Endothelial cell of umbilical vein (primary cell): ENCODE measurements at regions of chr2 and their contacts with region 1.

Region 1: DNA sequence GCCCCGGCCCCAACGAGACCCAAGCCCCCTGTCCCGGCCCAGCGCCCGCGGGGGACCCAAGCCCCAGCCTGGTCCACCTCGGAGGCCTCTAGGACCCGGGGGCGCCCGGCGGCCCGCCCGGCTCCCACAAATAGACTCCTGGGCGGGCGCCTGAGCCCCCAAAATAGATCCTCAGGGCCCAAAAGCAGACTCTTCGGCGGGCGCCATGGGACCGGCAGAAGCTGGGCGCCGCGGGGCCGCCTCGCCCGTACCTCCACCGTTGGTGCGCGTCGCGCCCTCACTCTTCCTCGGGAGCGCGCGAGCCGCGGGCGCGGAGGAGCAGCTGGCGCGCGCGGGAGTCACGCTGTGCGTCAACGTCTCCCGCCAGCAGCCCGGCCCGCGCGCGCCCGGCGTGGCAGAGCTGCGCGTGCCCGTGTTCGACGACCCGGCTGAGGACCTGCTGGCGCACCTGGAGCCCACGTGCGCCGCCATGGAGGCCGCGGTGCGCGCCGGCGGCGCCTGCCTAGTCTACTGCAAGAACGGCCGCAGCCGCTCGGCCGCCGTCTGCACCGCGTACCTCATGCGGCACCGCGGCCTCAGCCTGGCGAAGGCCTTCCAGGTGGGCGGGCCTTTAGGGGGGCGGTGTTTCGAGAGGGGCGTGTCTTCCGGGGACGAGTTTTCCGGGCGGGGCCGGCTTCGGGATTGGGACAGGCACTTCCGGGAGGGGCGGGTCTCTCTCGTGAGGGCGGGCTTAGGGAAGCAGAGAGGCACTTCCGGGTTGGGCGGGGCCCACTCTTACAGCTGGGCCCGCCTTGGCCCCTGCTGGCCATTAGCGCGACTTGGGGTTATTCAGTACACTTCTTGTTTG is 546 bp downstream of the DUSP28 start:
- DNase-seq: peak; percentile 98
- H3K4me3 ChIP-seq: peak overlapping the region; percentile 42 to 66 (median 61)
- H3K27ac ChIP-seq: peak overlapping the region; percentile 77
- H3K4me1 ChIP-seq: peaks cover 40% of the 10 kb centered on the region
- H3K27me3 ChIP-seq: no peaks in the 10 kb centered on the region
- CTCF ChIP-seq: peak; percentile 12 to 48
- POLR2A ChIP-seq: peak; percentile 92

Region 2: GRCh38 chr2:240021488-240022104 is 539.1 kb before region 1 on chr2:
- CTCF ChIA-PET with region 1: no interaction called
- POLR2A ChIA-PET with region 1: no interaction called
- dilution Hi-C with region 1: no loop called
- intact Hi-C with region 1: loop called (anchors 5 kb)
- DNase-seq: peak; percentile 65
- H3K4me3 ChIP-seq: no peak overlapping the region
- H3K27ac ChIP-seq: no peak overlapping the region
- H3K4me1 ChIP-seq: peaks cover 10% of the 10 kb centered on the region
- H3K27me3 ChIP-seq: no peaks in the 10 kb centered on the region
- CTCF ChIP-seq: peak; percentile 95 to 97
- POLR2A ChIP-seq: no peak

Region 3: GRCh38 chr2:240339996-240340761 is 220.5 kb before region 1 on chr2:
- CTCF ChIA-PET with region 1: no interaction called
- POLR2A ChIA-PET with region 1: no interaction called
- dilution Hi-C with region 1: no loop called
- intact Hi-C with region 1: no loop called
- DNase-seq: no peak
- H3K4me3 ChIP-seq: no peak overlapping the region
- H3K27ac ChIP-seq: no peak overlapping the region
- H3K4me1 ChIP-seq: no peaks in the 10 kb centered on the region
- H3K27me3 ChIP-seq: no peaks in the 10 kb centered on the region
- CTCF ChIP-seq: no peak
- POLR2A ChIP-seq: no peak

Region 4: DNA sequence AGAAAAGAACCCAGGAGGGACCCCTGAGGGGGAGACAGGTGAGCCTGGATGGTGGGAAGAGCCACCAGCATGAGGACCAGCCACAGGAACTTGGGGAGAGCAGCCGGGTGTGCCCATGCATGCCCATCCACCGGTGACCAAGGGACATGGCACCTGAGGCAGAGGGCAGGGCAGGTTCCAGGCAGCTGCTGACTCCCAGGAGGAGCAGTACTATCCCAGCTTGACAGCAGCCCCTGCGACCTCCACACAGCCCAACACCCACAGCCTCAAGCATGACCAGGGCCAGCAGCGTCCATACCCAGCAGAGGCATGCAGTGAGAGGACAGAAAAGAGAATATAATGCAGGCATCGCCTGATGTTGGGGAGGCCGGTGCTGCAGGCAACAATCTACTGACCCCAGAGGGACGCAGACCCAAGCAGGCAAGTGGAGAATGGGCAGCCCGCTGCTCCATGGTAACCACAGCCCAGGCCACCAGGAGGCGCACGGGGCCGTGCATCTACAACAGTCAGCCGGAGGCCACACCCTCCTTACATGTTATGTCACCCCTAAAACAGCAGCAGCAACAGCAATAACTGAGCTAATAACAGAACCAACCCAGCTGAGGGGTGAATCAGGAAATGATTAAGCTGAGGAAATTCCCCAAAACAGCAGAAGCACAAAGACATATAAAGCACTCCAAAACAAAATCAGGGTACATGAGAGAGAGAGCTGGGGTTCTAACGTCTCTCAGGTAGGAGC is 47.0 kb before region 1 on chr2:
- CTCF ChIA-PET with region 1: interaction called, 17 read pairs
- POLR2A ChIA-PET with region 1: interaction called, 4 read pairs
- dilution Hi-C with region 1: no loop called
- intact Hi-C with region 1: loop called (anchors 2 kb)
- DNase-seq: peak; percentile 70
- H3K4me3 ChIP-seq: no peak overlapping the region
- H3K27ac ChIP-seq: no peak overlapping the region
- H3K4me1 ChIP-seq: no peaks in the 10 kb centered on the region
- H3K27me3 ChIP-seq: no peaks in the 10 kb centered on the region
- CTCF ChIP-seq: peak; percentile 87 to 92
- POLR2A ChIP-seq: no peak

Region 5: GRCh38 chr2:240586198-240586918 is 25.7 kb after region 1 on chr2 and contains the start of gene CAPN10:
- CTCF ChIA-PET with region 1: interaction called, 47 read pairs
- POLR2A ChIA-PET with region 1: interaction called, 13 read pairs
- dilution Hi-C with region 1: no loop called
- intact Hi-C with region 1: loop called (anchors 1 kb)
- DNase-seq: peak; percentile 95
- H3K4me3 ChIP-seq: peak within 1 kb of the TSS; percentile 76 to 84 (median 84)
- H3K27ac ChIP-seq: peak within 1 kb of the TSS; percentile 74
- H3K4me1 ChIP-seq: peaks cover 17% of the 10 kb centered on the region
- H3K27me3 ChIP-seq: no peaks in the 10 kb centered on the region
- CTCF ChIP-seq: no peak
- POLR2A ChIP-seq: peak; percentile 66
- total RNA-seq, gene CAPN10: 37.9 and 39.9 TPM in 2 replicates

Region 6: GRCh38 chr2:240832205-240832727 is 271.6 kb after region 1 on chr2:
- CTCF ChIA-PET with region 1: no interaction called
- POLR2A ChIA-PET with region 1: no interaction called
- dilution Hi-C with region 1: no loop called
- intact Hi-C with region 1: loop called (anchors 2 kb)
- DNase-seq: peak; percentile 80
- H3K4me3 ChIP-seq: no peak overlapping the region
- H3K27ac ChIP-seq: no peak overlapping the region
- H3K4me1 ChIP-seq: peaks cover 5% of the 10 kb centered on the region
- H3K27me3 ChIP-seq: peaks cover 6 to 19% of the 10 kb centered on the region in 2 experiments
- CTCF ChIP-seq: no peak
- POLR2A ChIP-seq: no peak

Region 7: DNA sequence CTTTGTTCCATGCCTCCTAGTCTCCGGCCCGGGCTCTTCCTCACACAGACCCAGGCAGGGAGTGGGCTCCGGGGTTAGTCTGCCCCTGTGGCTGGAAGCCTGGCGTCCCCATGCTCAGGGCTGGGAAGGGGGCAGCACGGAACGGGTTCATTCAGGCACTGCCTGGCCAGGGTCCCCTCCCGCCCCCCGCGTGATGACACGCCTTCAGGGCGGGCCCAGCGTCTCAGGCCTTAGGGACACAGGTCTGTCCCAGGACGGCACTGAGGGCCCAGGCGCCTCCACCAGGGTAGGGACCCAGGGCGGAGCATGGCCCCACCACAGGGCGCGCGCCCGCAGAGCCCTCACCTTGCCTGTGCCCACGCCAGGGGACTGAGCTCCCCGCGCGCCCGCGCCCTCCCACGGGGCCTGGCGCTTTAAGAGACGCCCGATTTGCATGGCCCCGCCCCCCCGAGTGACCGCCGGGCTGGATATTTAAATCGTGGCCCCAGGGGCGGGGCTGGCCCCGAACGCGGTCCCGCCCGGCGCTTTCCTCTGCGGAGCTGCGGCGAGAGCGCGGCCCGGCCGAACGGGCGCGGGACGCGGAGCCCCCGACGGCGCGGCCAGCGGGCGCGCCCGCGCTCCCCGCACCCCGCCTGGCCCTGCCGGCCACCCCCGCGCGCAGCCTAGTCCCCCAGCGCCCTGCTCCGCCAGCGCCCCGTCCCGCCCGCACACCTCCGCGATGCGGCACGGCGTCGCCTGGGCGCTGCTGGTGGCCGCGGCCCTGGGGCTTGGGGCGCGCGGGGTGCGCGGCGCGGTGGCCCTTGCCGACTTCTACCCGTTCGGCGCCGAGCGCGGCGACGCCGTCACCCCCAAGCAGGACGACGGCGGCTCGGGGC is 437.7 kb after region 1 on chr2 and contains the start of gene SNED1:
- CTCF ChIA-PET with region 1: no interaction called
- POLR2A ChIA-PET with region 1: no interaction called
- dilution Hi-C with region 1: no loop called
- intact Hi-C with region 1: loop called (anchors 10 kb)
- DNase-seq: peak; percentile 93
- H3K4me3 ChIP-seq: peak within 1 kb of the TSS; percentile 42 to 46 (median 42)
- H3K27ac ChIP-seq: peak within 1 kb of the TSS; percentile 80
- H3K4me1 ChIP-seq: peaks cover 12% of the 10 kb centered on the region
- H3K27me3 ChIP-seq: no peaks in the 10 kb centered on the region
- CTCF ChIP-seq: no peak
- POLR2A ChIP-seq: peak; percentile 68
- total RNA-seq, gene SNED1: 17.2 and 22.1 TPM in 2 replicates